ENCODE measurements at regions of chr6 and their contacts with region 1.

Region 1: DNA sequence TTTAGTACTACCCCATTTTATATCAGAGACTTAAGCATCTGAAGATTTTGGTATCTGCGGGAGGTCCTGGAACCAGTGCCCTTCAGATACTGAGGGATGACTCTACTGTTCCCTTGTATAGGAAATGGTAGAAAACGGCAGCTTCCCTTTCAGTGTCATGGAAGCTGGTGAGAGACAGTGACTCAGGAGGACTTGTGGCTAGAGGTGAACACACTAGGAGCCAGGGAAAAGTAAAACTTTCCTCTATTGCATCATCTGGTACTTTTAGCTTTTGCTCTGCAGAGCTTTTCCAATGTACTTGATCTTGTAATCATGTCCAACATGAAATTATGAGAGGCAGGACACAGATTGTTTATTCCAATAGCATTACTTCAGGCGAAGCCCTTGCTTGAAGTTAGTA is 45.0 kb downstream of the RNF144B start:
- DNase-seq: peak; percentile 93
- H3K4me3 ChIP-seq: no peak overlapping the region
- H3K27ac ChIP-seq: peak overlapping the region; percentile 76
- H3K4me1 ChIP-seq: peaks cover 47% of the 10 kb centered on the region
- H3K27me3 ChIP-seq: no peaks in the 10 kb centered on the region
- CTCF ChIP-seq: no peak

Region 2: GRCh38 chr6:17892097-17892686 is 540.0 kb before region 1 on chr6:
- CTCF ChIA-PET with region 1: no interaction called
- dilution Hi-C with region 1: no loop called
- in situ Hi-C with region 1: no loop called
- intact Hi-C with region 1: no loop called
- DNase-seq: no peak
- H3K4me3 ChIP-seq: no peak overlapping the region
- H3K27ac ChIP-seq: no peak overlapping the region
- H3K4me1 ChIP-seq: no peaks in the 10 kb centered on the region
- H3K27me3 ChIP-seq: no peaks in the 10 kb centered on the region
- CTCF ChIP-seq: no peak

Region 3: GRCh38 chr6:18350712-18351111 is 81.5 kb before region 1 on chr6:
- CTCF ChIA-PET with region 1: no interaction called
- dilution Hi-C with region 1: no loop called
- in situ Hi-C with region 1: no loop called
- intact Hi-C with region 1: loop called (anchors 5 kb)
- DNase-seq: peak; percentile 31
- H3K4me3 ChIP-seq: no peak overlapping the region
- H3K27ac ChIP-seq: peak overlapping the region; percentile 63
- H3K4me1 ChIP-seq: peaks cover 62% of the 10 kb centered on the region
- H3K27me3 ChIP-seq: no peaks in the 10 kb centered on the region
- CTCF ChIP-seq: no peak

Region 4: GRCh38 chr6:18362058-18362561 is 70.1 kb before region 1 on chr6:
- CTCF ChIA-PET with region 1: interaction called, 17 read pairs
- dilution Hi-C with region 1: no loop called
- in situ Hi-C with region 1: no loop called
- intact Hi-C with region 1: no loop called
- DNase-seq: peak; percentile 90
- H3K4me3 ChIP-seq: no peak overlapping the region
- H3K27ac ChIP-seq: peak overlapping the region; percentile 31
- H3K4me1 ChIP-seq: peaks cover 20% of the 10 kb centered on the region
- H3K27me3 ChIP-seq: no peaks in the 10 kb centered on the region
- CTCF ChIP-seq: no peak